ENCODE measurements at regions of chr16 and their contacts with region 1.

Region 1: DNA sequence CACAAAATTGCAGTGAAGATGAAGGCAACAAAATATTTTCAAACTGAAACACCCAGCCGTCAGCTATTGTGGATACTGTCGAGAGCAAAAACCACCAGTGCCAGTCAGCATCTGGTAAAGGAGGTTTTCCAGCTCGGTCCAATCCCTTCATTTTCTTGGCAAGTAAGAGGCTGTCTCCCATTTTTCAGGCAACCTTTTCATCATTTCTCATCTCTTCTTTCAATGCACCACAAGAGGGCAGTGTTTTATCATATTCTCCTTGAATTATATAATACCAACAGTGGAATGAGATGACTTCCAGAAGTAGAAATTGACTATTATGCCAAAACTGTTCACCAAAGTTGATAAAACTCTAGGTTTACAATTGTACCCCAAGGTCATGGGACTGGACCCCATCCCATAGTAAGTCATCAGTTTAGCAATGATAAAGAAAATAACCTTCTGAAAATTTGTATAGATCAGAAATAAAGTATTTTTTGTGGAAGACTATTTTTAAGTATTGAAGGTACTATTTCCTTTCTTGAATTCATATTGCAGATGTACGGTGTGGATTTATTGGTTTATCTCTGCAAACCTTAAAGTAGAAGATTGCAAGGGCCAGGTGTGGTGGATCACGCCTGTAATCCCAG is 16.8 kb downstream of the NQO1 start:
- DNase-seq: no peak
- ATAC-seq: peak in 2 of 4 donors; percentile 57 to 58
- H3K4me3 ChIP-seq: no peak overlapping the region
- H3K27ac ChIP-seq: peak overlapping the region in 6 of 12 donors; percentile 14 to 36 (median 26)
- H3K4me1 ChIP-seq: peaks cover 0 to 9% (median 0%) of the 10 kb centered on the region in 12 donors
- H3K27me3 ChIP-seq: no peaks in the 10 kb centered on the region
- CTCF ChIP-seq: peak; percentile 53 to 83 (median 70)
- POLR2A ChIP-seq: no peak

Region 2: GRCh38 chr16:69754469-69755310 is 45.1 kb after region 1 on chr16 and contains the start of gene NOB1:
- intact Hi-C with region 1: loop called (anchors 1 to 5 kb)
- DNase-seq: peak; percentile 94 to 99 (median 97)
- ATAC-seq: peak; percentile 97 to 99 (median 98)
- H3K4me3 ChIP-seq: peak within 1 kb of the TSS; percentile 67 to 97 (median 82)
- H3K27ac ChIP-seq: peak within 1 kb of the TSS in 11 of 12 donors; percentile 43 to 82 (median 76)
- H3K4me1 ChIP-seq: peaks cover 0 to 25% (median 15%) of the 10 kb centered on the region in 12 donors
- H3K27me3 ChIP-seq: no peaks in the 10 kb centered on the region
- CTCF ChIP-seq: peak; percentile 96 to 100 (median 99)
- POLR2A ChIP-seq: peak in 1 of 2 donors; percentile 68
- total RNA-seq, gene NOB1: 10.9 to 26.0 (median 16.8) TPM

Measured in heart left ventricle (tissue), 16 donors.